Panc1 (cell line): ENCODE measurements at regions of chr15 and their contacts with region 1.

Region 1: GRCh38 chr15:66851226-66852071 is 149.4 kb downstream of the SMAD6 start:
- DNase-seq: no peak
- ATAC-seq: peak; percentile 86
- H3K4me3 ChIP-seq: peak overlapping the region in 1 of 2 experiments; percentile 7; a peak in 1 of 4 replicates
- H3K27ac ChIP-seq: peak overlapping the region; percentile 93
- H3K4me1 ChIP-seq: peaks cover 56% of the 10 kb centered on the region
- H3K27me3 ChIP-seq: no peaks in the 10 kb centered on the region
- CTCF ChIP-seq: peak; percentile 99

Region 2: GRCh38 chr15:66638377-66638776 is 213.1 kb before region 1 on chr15:
- CTCF ChIA-PET with region 1: interaction called, 10 read pairs
- POLR2A ChIA-PET with region 1: no interaction called
- in situ Hi-C with region 1: no loop called
- intact Hi-C with region 1: no loop called
- DNase-seq: no peak
- ATAC-seq: no peak
- H3K4me3 ChIP-seq: no peak overlapping the region
- H3K27ac ChIP-seq: no peak overlapping the region
- H3K4me1 ChIP-seq: no peaks in the 10 kb centered on the region
- H3K27me3 ChIP-seq: no peaks in the 10 kb centered on the region
- CTCF ChIP-seq: no peak

Region 3: DNA sequence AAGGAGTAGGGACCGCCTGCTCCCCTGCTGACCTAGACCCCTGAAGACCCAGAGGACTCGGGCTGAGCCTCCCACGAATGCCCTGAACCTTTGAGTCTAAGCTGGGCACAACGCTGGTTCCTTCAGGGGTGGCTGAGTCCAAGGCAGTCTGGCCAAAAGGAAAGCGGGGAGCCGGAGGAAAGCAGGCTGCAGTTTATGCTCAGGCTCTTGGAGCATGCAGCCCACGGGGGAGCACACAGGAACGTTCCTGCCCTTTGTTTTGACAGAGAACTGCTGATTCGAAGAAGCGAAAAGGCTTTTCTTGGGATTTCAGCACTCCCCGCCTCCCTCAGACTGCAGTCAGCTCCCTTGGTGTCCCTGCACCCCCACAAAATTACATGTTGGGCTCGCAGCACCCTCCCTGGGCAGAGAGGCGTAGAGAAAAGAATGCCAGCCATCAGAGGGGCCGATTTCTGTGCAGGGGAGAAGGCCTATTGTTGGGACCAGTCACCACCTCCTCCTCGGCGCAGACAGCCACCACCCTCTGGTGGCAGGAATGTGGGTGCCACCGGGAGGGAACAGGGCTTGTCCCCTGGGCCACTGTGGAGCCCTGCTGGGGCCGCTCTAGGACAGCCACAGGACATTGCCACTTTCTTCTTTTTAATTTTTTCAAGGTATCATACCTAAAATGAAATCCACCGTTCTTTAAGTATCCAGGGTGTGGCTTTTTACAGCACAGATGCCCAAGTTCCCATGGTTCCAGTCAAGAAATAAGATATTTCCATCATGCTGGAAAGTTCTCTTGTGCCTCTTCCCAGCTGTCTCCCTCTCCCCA is 77.2 kb before region 1 on chr15:
- CTCF ChIA-PET with region 1: interaction called, 5 read pairs
- POLR2A ChIA-PET with region 1: no interaction called
- in situ Hi-C with region 1: no loop called
- intact Hi-C with region 1: loop called (anchors 5 kb)
- DNase-seq: peak; percentile 66
- ATAC-seq: peak; percentile 89
- H3K4me3 ChIP-seq: peak overlapping the region in 1 of 2 experiments; percentile 15; a peak in 1 of 4 replicates
- H3K27ac ChIP-seq: peak overlapping the region; percentile 93
- H3K4me1 ChIP-seq: peaks cover 96% of the 10 kb centered on the region
- H3K27me3 ChIP-seq: no peaks in the 10 kb centered on the region
- CTCF ChIP-seq: peak; percentile 99

Region 4: GRCh38 chr15:66796343-66796742 is 55.1 kb before region 1 on chr15:
- CTCF ChIA-PET with region 1: interaction called, 13 read pairs
- POLR2A ChIA-PET with region 1: interaction called, 7 read pairs
- in situ Hi-C with region 1: no loop called
- intact Hi-C with region 1: no loop called
- DNase-seq: no peak
- ATAC-seq: no peak
- H3K4me3 ChIP-seq: no peak overlapping the region
- H3K27ac ChIP-seq: peak overlapping the region; percentile 55
- H3K4me1 ChIP-seq: peaks cover 25% of the 10 kb centered on the region
- H3K27me3 ChIP-seq: no peaks in the 10 kb centered on the region
- CTCF ChIP-seq: no peak

Region 5: GRCh38 chr15:66966257-66966656 is 114.8 kb after region 1 on chr15:
- CTCF ChIA-PET with region 1: no interaction called
- POLR2A ChIA-PET with region 1: no interaction called
- in situ Hi-C with region 1: no loop called
- intact Hi-C with region 1: no loop called
- DNase-seq: no peak
- ATAC-seq: no peak
- H3K4me3 ChIP-seq: no peak overlapping the region
- H3K27ac ChIP-seq: no peak overlapping the region
- H3K4me1 ChIP-seq: peaks cover 3% of the 10 kb centered on the region
- H3K27me3 ChIP-seq: no peaks in the 10 kb centered on the region
- CTCF ChIP-seq: no peak

Region 6: DNA sequence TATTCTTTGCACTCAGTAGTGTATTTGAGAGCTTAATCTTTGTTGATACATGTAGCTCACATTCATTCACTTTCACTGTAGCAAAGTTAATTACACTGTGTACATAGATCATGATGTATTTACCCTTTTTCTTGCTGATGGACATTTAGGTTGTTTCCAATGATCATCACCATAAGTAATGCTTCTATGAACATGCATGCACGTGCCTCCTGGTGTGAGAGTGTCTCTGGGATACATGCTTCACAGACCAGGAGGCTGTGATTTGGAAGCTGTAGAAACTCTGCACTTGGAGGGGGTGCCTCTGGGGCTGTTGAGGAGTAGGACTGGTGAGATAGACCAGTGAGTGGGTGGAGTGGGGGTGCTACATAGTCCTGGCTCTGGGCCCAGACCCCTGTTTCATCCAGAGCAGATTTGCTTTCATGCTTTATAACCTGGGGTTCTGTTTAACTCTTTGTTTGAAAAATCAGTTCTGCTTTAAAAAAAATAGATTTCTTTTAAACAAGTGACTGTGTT is 195.8 kb after region 1 on chr15:
- CTCF ChIA-PET with region 1: interaction called, 3 read pairs
- POLR2A ChIA-PET with region 1: interaction called, 15 read pairs
- in situ Hi-C with region 1: no loop called
- intact Hi-C with region 1: no loop called
- DNase-seq: no peak
- ATAC-seq: no peak
- H3K4me3 ChIP-seq: no peak overlapping the region
- H3K27ac ChIP-seq: peak overlapping the region; percentile 97
- H3K4me1 ChIP-seq: peaks cover 63% of the 10 kb centered on the region
- H3K27me3 ChIP-seq: no peaks in the 10 kb centered on the region
- CTCF ChIP-seq: no peak